Panc1 (cell line): ENCODE measurements at regions of chr5 and their contacts with region 1.

Region 1: GRCh38 chr5:118336468-118336867 is 651.9 kb downstream of the DTWD2 start:
- DNase-seq: no peak
- ATAC-seq: no peak
- H3K4me3 ChIP-seq: no peak overlapping the region
- H3K27ac ChIP-seq: no peak overlapping the region
- H3K4me1 ChIP-seq: no peaks in the 10 kb centered on the region
- H3K27me3 ChIP-seq: no peaks in the 10 kb centered on the region
- CTCF ChIP-seq: no peak

Region 2: GRCh38 chr5:118371973-118372831 is 35.7 kb after region 1 on chr5:
- CTCF ChIA-PET with region 1: no interaction called
- POLR2A ChIA-PET with region 1: interaction called, 10 read pairs
- in situ Hi-C with region 1: no loop called
- intact Hi-C with region 1: no loop called
- DNase-seq: no peak
- ATAC-seq: no peak
- H3K4me3 ChIP-seq: no peak overlapping the region
- H3K27ac ChIP-seq: no peak overlapping the region
- H3K4me1 ChIP-seq: no peaks in the 10 kb centered on the region
- H3K27me3 ChIP-seq: no peaks in the 10 kb centered on the region
- CTCF ChIP-seq: no peak

Region 3: GRCh38 chr5:118529361-118530144 is 193.1 kb after region 1 on chr5:
- CTCF ChIA-PET with region 1: no interaction called
- POLR2A ChIA-PET with region 1: no interaction called
- in situ Hi-C with region 1: no loop called
- intact Hi-C with region 1: no loop called
- DNase-seq: no peak
- ATAC-seq: no peak
- H3K4me3 ChIP-seq: no peak overlapping the region
- H3K27ac ChIP-seq: no peak overlapping the region
- H3K4me1 ChIP-seq: no peaks in the 10 kb centered on the region
- H3K27me3 ChIP-seq: no peaks in the 10 kb centered on the region
- CTCF ChIP-seq: no peak

Region 4: GRCh38 chr5:119397518-119398380 is 1061.3 kb after region 1 on chr5:
- CTCF ChIA-PET with region 1: no interaction called
- POLR2A ChIA-PET with region 1: no interaction called
- in situ Hi-C with region 1: no loop called
- intact Hi-C with region 1: no loop called
- DNase-seq: no peak
- ATAC-seq: no peak
- H3K4me3 ChIP-seq: no peak overlapping the region
- H3K27ac ChIP-seq: no peak overlapping the region
- H3K4me1 ChIP-seq: peaks cover 3% of the 10 kb centered on the region; the same call in 1 of the 2 replicates
- H3K27me3 ChIP-seq: no peaks in the 10 kb centered on the region
- CTCF ChIP-seq: no peak